Posterior cingulate gyrus (tissue), 11 donors: ENCODE measurements at regions of chr14 and their contacts with region 1.

Region 1: DNA sequence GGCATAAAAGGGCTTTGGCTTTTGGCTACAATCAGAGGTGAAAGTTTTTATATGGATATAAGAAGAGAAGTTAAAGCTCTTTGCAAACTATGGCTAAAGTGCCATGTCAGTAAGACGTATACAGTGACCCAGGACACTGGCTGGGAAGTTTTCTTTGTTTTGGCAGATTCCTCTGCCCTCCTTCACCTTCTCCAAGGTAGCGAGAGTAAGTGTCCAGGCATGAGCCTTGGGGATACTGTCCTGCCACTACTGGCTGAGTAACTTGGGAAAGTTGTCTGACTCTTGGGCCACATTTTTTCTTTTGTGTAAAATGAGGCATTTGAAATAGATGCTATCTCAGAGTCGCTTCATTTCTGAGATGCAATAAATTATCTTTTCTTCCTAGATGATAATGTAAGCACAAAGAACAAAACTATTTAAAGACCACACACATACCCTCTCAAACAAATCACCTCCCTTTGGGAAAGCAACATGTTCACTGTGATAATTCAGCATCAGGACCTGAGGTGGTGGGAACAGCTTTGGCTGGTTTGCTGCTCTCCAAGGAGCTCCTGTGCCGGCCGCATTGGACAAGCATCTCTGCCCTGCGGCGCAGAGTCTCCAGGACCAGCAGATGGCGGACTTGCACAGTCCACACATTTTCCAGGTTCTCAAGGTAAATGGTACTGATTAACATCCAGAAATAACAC is 106.3 kb downstream of the PTCSC3 start:
- DNase-seq: peak; percentile 61 to 97 (median 78)

Region 2: GRCh38 chr14:35883677-35884293 is 186.4 kb before region 1 on chr14:
- intact Hi-C with region 1: loop called (anchors 1 kb)
- DNase-seq: peak in 6 of 10 donors; percentile 36 to 91 (median 59)

Region 3: GRCh38 chr14:35963209-35963608 is 107.0 kb before region 1 on chr14:
- intact Hi-C with region 1: loop called (anchors 1 kb)
- DNase-seq: no peak